ENCODE measurements at regions of chr5 and their contacts with region 1.

Region 1: DNA sequence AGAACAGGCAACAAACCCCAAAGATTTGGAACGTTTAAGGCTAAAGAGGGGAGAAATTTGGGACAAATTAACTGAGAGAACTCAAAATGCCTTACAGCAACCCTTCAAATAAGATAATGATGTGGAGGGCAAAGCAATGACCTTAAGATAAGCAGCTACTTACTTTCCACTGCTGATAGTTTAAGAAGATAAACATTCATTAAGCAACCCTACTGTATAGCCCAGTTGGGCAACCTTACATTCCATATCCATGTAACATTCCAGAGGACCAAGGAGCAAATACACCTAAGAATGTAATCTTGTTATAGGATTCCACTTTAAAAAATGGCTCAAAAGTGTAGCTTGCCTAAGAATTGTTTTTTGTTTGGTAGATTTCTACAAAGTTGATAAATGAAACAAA is 14.8 kb downstream of the ETF1 start:
- DNase-seq: peak; percentile 41
- H3K4me3 Mint-ChIP-seq: peak overlapping the region; percentile 1
- H3K27ac Mint-ChIP-seq: no peak overlapping the region
- H3K4me1 Mint-ChIP-seq: peaks cover 49% of the 10 kb centered on the region
- H3K27me3 Mint-ChIP-seq: no peaks in the 10 kb centered on the region
- CTCF ChIP-seq: no peak

Region 2: GRCh38 chr5:138508963-138509362 is 19.2 kb before region 1 on chr5:
- CTCF ChIA-PET with region 1: interaction called, 166 read pairs
- POLR2A ChIA-PET with region 1: interaction called, 103 read pairs
- intact Hi-C with region 1: no loop called
- DNase-seq: no peak
- H3K4me3 Mint-ChIP-seq: no peak overlapping the region
- H3K27ac Mint-ChIP-seq: peak overlapping the region; percentile 80
- H3K4me1 Mint-ChIP-seq: peaks cover 41% of the 10 kb centered on the region
- H3K27me3 Mint-ChIP-seq: no peaks in the 10 kb centered on the region
- CTCF ChIP-seq: no peak

Region 3: DNA sequence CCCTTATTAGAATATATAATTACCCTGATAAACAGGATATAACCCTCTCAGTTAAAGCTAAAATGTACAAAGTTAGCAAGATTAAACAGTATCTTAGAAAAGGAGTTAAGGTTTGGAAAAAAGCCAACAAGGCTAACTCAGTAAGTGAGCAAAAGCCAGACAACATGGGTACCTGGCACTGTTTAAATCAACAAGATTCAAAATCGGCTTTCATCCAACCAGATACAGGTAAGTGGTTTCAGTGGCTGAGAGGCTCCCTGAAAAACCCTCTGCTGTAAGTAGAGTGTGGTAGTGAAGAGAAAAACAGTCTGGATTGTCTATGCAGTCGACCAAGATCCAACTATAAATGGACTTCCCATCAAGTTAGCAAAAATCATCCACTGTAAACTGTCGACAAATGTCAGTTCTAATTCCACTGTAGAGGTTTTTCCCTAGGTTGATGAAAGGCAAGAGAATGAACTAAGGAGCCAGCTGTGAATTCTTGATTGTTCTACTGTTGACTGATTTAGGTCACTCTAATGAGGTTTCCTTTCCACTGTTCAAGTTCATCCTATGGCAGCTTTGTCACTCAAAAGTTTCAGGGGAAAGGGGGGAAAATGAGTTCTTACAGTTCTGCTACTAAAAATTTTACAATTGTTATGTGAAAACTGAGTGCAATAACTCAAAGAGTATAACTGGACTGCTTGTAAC is 12.5 kb before region 1 on chr5:
- CTCF ChIA-PET with region 1: interaction called, 26 read pairs
- POLR2A ChIA-PET with region 1: interaction called, 24 read pairs
- intact Hi-C with region 1: no loop called
- DNase-seq: no peak
- H3K4me3 Mint-ChIP-seq: no peak overlapping the region
- H3K27ac Mint-ChIP-seq: peak overlapping the region; percentile 59
- H3K4me1 Mint-ChIP-seq: peaks cover 15% of the 10 kb centered on the region
- H3K27me3 Mint-ChIP-seq: no peaks in the 10 kb centered on the region
- CTCF ChIP-seq: no peak

Region 4: DNA sequence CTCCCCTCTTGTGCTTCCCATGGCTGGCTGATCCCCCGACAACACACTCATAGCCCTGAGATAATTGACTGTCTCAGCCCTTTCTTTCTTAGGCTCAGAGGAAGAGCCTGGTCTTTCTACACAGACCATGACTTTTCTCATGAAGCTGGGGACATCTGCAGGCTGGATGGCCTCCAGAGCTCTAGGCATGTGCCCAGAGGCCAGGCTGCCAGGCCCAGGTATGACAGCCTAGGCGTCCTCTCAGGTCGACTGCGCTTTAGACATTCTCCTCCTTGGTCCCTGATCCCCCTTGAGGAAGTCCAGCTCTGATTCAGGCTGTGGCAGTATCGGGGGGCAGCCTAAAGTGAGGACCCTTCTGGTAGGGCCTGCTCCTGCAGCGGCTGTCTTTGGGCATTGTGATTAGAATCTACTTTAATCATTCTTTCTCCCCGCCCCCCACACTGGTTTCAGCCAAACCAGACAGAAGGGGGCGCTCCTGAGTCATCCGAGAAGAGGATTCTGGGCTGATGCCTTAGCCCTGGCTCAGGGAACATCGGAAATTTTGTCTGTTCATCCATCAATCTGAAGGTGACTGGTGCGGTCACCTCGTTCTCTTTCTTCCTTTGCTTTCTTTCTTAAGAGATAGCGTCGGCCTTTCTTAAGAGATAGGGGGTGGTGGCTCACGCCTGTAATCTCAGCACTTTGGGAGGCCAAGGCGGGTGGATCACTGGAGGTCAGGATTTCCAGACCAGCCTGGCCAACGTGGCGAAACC is 113.5 kb after region 1 on chr5:
- CTCF ChIA-PET with region 1: no interaction called
- POLR2A ChIA-PET with region 1: no interaction called
- intact Hi-C with region 1: no loop called
- DNase-seq: peak; percentile 91
- H3K4me3 Mint-ChIP-seq: no peak overlapping the region
- H3K27ac Mint-ChIP-seq: no peak overlapping the region
- H3K4me1 Mint-ChIP-seq: peaks cover 4% of the 10 kb centered on the region
- H3K27me3 Mint-ChIP-seq: no peaks in the 10 kb centered on the region
- CTCF ChIP-seq: peak; percentile 97